Aorta (tissue), 5 donors: ENCODE measurements at regions of chr5 and their contacts with region 1.

Region 1: DNA sequence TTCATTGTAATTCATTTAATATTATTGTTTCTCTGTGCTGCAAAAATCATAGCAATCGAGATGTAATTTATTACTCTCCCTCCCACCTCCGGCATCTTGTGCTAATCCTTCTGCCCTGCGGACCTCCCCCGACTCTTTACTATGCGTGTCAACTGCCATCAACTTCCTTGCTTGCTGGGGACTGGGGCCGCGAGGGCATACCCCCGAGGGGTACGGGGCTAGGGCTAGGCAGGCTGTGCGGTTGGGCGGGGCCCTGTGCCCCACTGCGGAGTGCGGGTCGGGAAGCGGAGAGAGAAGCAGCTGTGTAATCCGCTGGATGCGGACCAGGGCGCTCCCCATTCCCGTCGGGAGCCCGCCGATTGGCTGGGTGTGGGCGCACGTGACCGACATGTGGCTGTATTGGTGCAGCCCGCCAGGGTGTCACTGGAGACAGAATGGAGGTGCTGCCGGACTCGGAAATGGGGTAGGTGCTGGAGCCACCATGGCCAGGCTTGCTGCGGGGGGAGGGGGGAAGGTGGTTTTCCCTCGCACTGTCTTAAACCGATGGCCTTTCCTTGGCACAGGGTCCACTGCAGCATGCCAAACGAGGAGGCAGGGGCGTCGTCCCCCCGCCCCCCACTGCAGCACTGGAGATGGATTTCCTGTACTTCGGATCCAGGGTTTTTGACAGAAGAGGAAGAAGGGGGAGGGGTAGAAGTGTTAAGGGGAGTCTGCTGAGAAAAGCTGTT is at the start of gene APC:
- DNase-seq: peak; percentile 95 to 98
- ATAC-seq: peak; percentile 97
- H3K4me3 ChIP-seq: peak within 1 kb of the TSS; percentile 38 to 93
- H3K27ac ChIP-seq: peak within 1 kb of the TSS in 1 of 2 donors; percentile 71
- H3K4me1 ChIP-seq: peaks cover 0 to 4% of the 10 kb centered on the region in 2 donors
- H3K27me3 ChIP-seq: no peaks in the 10 kb centered on the region
- total RNA-seq, gene APC: 49.8 to 51.6 TPM

Region 2: GRCh38 chr5:112684737-112685136 is 52.9 kb before region 1 on chr5:
- intact Hi-C with region 1: loop called in 1 of 2 experiments (anchors 10 kb)
- DNase-seq: no peak
- ATAC-seq: peak; percentile 88
- H3K4me3 ChIP-seq: no peak overlapping the region
- H3K27ac ChIP-seq: peak overlapping the region; percentile 47 to 98
- H3K4me1 ChIP-seq: peaks cover 0 to 3% of the 10 kb centered on the region in 2 donors
- H3K27me3 ChIP-seq: no peaks in the 10 kb centered on the region